ENCODE measurements at regions of chr17 and their contacts with region 1.

Region 1: GRCh38 chr17:7296189-7296902 is 1.9 kb upstream of the YBX2 start:
- DNase-seq: peak; percentile 88
- ATAC-seq: peak; percentile 76 to 87

Region 2: DNA sequence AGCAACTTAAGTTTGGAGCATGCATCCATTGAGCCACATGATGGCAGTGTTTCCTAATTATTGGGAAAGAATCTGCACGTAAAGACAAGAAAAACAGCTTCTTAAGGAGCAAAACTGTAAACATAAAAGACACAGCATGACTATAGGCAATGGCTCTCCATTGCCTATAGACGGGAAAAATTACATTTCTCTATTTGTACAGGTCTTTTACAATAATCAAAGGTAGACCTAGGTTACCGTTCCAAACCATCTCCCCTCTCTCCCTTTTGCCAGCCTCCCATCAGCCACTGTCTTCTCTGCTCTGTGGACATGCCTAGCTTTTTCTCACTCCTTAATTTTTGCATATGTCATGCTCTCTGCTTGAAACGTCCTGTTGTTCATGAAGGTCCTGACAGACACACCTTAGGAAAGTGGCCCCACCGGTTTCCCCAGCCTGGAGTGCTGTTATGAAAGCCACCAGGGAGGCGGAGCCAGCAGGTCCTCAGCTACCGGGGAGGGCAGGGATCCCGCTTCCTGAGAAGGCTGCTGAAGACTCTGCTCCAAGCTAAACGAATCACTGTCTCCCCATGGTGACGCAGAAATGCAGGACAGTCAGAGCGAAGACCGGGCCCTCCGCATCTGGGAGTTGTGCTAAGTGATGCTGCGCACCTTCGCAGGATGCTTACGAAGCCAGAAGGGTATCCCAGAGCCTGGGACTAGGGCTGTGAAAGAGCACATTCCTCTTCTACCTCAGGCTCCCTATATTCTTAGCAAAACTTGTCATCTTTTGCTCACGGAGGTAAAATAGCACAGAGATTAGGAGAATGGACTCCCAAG is 250.2 kb before region 1 on chr17:
- intact Hi-C with region 1: loop called in 1 of 2 experiments (anchors 5 kb)
- DNase-seq: no peak
- ATAC-seq: peak in 1 of 2 donors; percentile 23

Region 3: GRCh38 chr17:7239091-7240027 is 57.0 kb before region 1 on chr17 and contains the start of gene PHF23:
- intact Hi-C with region 1: no loop called
- DNase-seq: peak; percentile 99
- ATAC-seq: peak; percentile 71 to 79
- total RNA-seq, gene PHF23: 18.5 to 27.5 TPM

Region 4: GRCh38 chr17:7280519-7281429 is 15.6 kb before region 1 on chr17:
- intact Hi-C with region 1: loop called (anchors 1 to 2 kb)
- DNase-seq: peak; percentile 85
- ATAC-seq: peak; percentile 64 to 82

Measured in left cardiac atrium (tissue), 4 donors.